PC-9 (cell line): ENCODE measurements at regions of chr19 and their contacts with region 1.

Region 1: DNA sequence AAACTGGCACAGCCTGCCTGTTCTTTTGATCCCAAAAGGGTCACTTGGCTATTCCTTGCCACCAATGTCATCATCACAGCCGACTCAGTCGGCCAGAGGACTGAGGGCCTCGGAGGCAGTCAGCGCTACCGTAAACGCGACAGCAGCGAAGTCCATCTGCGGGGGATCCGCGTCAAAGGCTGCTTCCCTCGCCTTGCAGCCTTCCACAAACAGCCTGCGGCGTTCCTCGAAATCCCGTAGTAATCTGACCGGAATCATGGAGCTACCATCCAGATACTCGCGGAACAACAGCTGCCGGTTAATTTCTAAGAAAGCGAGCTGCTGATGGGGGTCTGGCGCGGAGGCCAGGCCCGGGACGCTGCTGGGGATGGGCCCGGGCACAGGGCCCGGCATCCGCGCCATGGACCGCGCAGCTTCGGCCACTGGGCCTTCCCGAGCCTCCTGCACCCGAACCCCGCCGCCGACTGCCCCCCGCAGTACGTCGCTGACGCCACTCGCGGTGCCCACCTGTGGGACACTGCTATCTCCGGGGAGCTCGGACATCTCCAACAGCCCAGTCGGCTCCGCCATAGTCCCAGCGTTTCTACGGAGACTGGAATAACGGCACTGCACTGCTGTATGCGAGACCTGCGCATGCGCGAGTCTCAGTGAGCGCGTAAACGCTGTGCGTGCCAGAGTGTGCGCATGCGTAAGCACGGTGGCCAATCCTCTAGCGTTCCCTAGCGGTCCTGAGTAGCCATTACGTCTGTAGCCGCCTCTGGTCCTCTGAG is at the start of gene EID2B:
- DNase-seq: peak; percentile 82 to 92
- H3K4me3 ChIP-seq: peak within 1 kb of the TSS; percentile 91
- H3K27ac ChIP-seq: no peak within 1 kb of the TSS
- H3K4me1 ChIP-seq: peaks cover 10% of the 10 kb centered on the region; the same call in 1 of the 2 replicates
- H3K27me3 ChIP-seq: no peaks in the 10 kb centered on the region
- CTCF ChIP-seq: peak; percentile 94
- total RNA-seq, gene EID2B: 2.3 and 3.4 TPM in 2 replicates

Region 2: GRCh38 chr19:39397360-39398296 is 134.8 kb before region 1 on chr19:
- CTCF ChIA-PET with region 1: no interaction called
- POLR2A ChIA-PET with region 1: no interaction called
- intact Hi-C with region 1: loop called (anchors 2 kb)
- DNase-seq: peak; percentile 60 to 85
- H3K4me3 ChIP-seq: peak overlapping the region; percentile 17; the same call in 1 of the 2 replicates
- H3K27ac ChIP-seq: peak overlapping the region; percentile 95
- H3K4me1 ChIP-seq: peaks cover 24% of the 10 kb centered on the region
- H3K27me3 ChIP-seq: no peaks in the 10 kb centered on the region
- CTCF ChIP-seq: peak; percentile 93

Region 3: GRCh38 chr19:39474139-39474622 is 58.2 kb before region 1 on chr19:
- CTCF ChIA-PET with region 1: no interaction called
- POLR2A ChIA-PET with region 1: no interaction called
- intact Hi-C with region 1: loop called (anchors 2 kb)
- DNase-seq: peak in 1 of 2 experiments; percentile 48
- H3K4me3 ChIP-seq: no peak overlapping the region
- H3K27ac ChIP-seq: no peak overlapping the region
- H3K4me1 ChIP-seq: no peaks in the 10 kb centered on the region
- H3K27me3 ChIP-seq: no peaks in the 10 kb centered on the region
- CTCF ChIP-seq: peak; percentile 84

Region 4: DNA sequence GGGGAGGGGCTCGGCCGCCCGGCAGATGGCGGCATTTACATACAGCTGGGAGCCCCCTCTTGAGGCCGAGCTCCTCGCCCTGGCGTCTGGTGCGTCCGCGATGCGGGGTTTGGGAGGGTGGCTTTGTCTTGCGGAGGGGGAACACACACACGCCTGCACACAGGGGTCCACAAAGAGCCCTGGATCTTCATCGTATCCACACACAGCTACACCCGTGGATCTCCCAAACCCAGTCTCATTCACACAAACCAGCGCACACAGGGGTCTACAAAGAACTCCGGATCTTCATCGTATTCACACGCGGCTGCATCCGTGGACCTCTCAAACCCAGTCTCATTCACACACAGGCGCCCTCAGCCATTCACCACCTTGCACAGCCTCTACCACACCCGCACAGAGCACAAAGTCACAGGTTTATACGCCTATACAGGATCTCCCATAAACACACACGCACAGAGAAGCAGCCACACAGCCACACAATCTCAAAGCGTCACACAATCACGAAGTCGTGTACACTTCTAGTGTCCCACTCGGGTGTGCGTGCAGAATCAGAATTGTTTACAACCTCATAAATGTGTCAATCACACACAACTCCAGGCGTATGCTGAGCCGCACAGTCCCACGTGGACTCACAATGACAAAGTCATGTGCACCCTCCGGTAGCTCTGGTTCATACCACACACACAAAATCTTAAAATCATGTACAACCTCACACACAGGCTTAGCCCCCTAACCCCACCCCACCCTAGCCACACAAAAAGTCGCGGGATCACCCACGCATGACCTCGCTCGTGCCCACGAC is 34.2 kb before region 1 on chr19:
- CTCF ChIA-PET with region 1: no interaction called
- POLR2A ChIA-PET with region 1: interaction called, 11 read pairs
- intact Hi-C with region 1: loop called (anchors 2 kb)
- DNase-seq: peak in 1 of 2 experiments; percentile 44
- H3K4me3 ChIP-seq: no peak overlapping the region
- H3K27ac ChIP-seq: no peak overlapping the region
- H3K4me1 ChIP-seq: peaks cover 1% of the 10 kb centered on the region; the same call in 1 of the 2 replicates
- H3K27me3 ChIP-seq: peaks cover 37% of the 10 kb centered on the region
- CTCF ChIP-seq: no peak

Region 5: GRCh38 chr19:39599116-39599515 is 66.7 kb after region 1 on chr19:
- CTCF ChIA-PET with region 1: no interaction called
- POLR2A ChIA-PET with region 1: no interaction called
- intact Hi-C with region 1: no loop called
- DNase-seq: peak in 1 of 2 experiments; percentile 21
- H3K4me3 ChIP-seq: no peak overlapping the region
- H3K27ac ChIP-seq: no peak overlapping the region
- H3K4me1 ChIP-seq: no peaks in the 10 kb centered on the region
- H3K27me3 ChIP-seq: peaks cover 33% of the 10 kb centered on the region
- CTCF ChIP-seq: no peak

Region 6: GRCh38 chr19:39814595-39814994 is 282.2 kb after region 1 on chr19:
- CTCF ChIA-PET with region 1: no interaction called
- POLR2A ChIA-PET with region 1: no interaction called
- intact Hi-C with region 1: no loop called
- DNase-seq: no peak
- H3K4me3 ChIP-seq: no peak overlapping the region
- H3K27ac ChIP-seq: no peak overlapping the region
- H3K4me1 ChIP-seq: no peaks in the 10 kb centered on the region
- H3K27me3 ChIP-seq: peaks cover 4% of the 10 kb centered on the region; the same call in 1 of the 2 replicates
- CTCF ChIP-seq: no peak